MCF 10A (cell line): ENCODE measurements at regions of chr6 and their contacts with region 1.

Region 1: GRCh38 chr6:7479801-7480266 is 61.6 kb upstream of the DSP start:
- DNase-seq: peak; percentile 100
- H3K4me3 Mint-ChIP-seq: peak overlapping the region; percentile 39
- H3K27ac Mint-ChIP-seq: peak overlapping the region; percentile 89
- H3K4me1 Mint-ChIP-seq: peaks cover 11% of the 10 kb centered on the region
- H3K27me3 Mint-ChIP-seq: no peaks in the 10 kb centered on the region
- CTCF ChIP-seq: no peak

Region 2: GRCh38 chr6:7424967-7425807 is 54.6 kb before region 1 on chr6:
- CTCF ChIA-PET with region 1: interaction called, 3 read pairs
- POLR2A ChIA-PET with region 1: interaction called, 16 read pairs
- intact Hi-C with region 1: loop called (anchors 2 kb)
- DNase-seq: peak; percentile 80
- H3K4me3 Mint-ChIP-seq: no peak overlapping the region
- H3K27ac Mint-ChIP-seq: no peak overlapping the region
- H3K4me1 Mint-ChIP-seq: no peaks in the 10 kb centered on the region
- H3K27me3 Mint-ChIP-seq: no peaks in the 10 kb centered on the region
- CTCF ChIP-seq: peak; percentile 61

Region 3: DNA sequence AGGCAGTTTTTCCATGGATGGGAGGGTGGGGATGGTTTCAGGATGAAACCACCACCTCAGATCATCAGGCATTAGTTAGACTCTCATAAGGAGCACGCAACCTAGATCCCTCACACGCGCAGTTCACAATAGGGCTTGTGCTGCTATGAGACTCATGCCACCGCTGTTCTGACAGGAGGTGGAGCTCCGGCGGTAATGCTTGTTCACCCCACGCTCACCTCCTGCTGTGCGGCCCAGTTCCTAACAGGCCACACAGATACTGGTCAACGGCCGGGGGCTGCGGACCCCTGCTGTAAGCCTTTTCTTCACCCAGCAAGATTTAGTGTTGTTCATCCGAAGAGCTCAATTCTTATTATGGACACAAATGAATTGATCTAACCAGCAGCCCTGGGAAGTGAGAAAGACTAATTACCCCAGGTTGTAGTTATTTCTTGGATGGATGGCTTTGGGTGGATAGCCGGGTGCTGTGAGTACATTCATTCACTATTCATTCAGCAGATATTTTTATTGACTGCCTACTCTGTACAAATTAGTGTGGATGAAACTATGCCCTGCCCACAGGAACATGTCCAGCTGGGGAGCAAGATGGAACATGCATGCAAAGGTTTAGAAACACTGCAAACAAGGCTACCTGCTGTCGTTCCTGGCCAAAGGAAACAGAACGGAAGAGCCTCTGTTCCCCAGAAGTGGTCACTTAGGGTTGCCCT is 33.1 kb before region 1 on chr6:
- CTCF ChIA-PET with region 1: no interaction called
- POLR2A ChIA-PET with region 1: interaction called, 14 read pairs
- intact Hi-C with region 1: no loop called
- DNase-seq: peak; percentile 60
- H3K4me3 Mint-ChIP-seq: peak overlapping the region; percentile 18
- H3K27ac Mint-ChIP-seq: peak overlapping the region; percentile 5
- H3K4me1 Mint-ChIP-seq: peaks cover 21% of the 10 kb centered on the region
- H3K27me3 Mint-ChIP-seq: no peaks in the 10 kb centered on the region
- CTCF ChIP-seq: no peak

Region 4: DNA sequence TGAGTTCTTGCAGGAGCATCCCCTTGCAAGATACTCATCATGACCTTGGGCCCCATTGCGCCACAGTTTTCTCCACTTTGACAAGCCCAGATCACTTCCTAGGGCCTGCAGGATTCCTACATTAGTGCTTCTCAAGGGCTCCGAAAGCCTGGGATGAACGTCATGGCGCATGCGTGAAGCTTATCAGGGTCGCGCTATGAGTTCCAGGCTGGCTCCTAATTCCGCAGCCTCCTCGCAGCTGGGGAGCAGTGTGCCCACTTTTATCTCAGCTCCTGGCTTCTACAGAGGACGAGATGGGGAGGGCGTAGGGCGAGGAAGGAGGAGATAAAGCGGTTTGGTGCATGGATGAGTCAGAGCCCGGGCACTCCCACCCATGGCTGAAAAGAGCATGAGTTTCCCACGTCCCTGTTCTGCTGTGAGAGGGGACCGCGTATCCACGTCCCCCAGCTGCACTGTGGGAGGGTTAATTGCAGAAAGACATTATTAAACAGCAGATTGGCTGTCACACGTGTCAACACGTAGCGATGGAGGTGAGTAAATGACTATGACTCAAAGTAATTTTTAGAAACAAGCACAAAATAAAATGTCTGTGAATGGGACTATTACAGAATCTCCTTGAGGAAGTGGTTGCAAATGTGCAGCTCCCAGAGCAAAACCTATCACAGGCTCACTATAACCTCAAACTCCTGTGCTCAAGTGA is 11.3 kb before region 1 on chr6:
- CTCF ChIA-PET with region 1: interaction called, 3 read pairs
- POLR2A ChIA-PET with region 1: interaction called, 34 read pairs
- intact Hi-C with region 1: no loop called
- DNase-seq: peak; percentile 77
- H3K4me3 Mint-ChIP-seq: peak overlapping the region; percentile 72
- H3K27ac Mint-ChIP-seq: peak overlapping the region; percentile 83
- H3K4me1 Mint-ChIP-seq: peaks cover 30% of the 10 kb centered on the region
- H3K27me3 Mint-ChIP-seq: no peaks in the 10 kb centered on the region
- CTCF ChIP-seq: no peak

Region 5: GRCh38 chr6:7513529-7513928 is 33.7 kb after region 1 on chr6:
- CTCF ChIA-PET with region 1: interaction called, 6 read pairs
- POLR2A ChIA-PET with region 1: interaction called, 106 read pairs
- intact Hi-C with region 1: no loop called
- DNase-seq: peak; percentile 14
- H3K4me3 Mint-ChIP-seq: no peak overlapping the region
- H3K27ac Mint-ChIP-seq: no peak overlapping the region
- H3K4me1 Mint-ChIP-seq: peaks cover 31% of the 10 kb centered on the region
- H3K27me3 Mint-ChIP-seq: no peaks in the 10 kb centered on the region
- CTCF ChIP-seq: no peak

Region 6: GRCh38 chr6:7550433-7550801 is 70.6 kb after region 1 on chr6:
- CTCF ChIA-PET with region 1: no interaction called
- POLR2A ChIA-PET with region 1: interaction called, 97 read pairs
- intact Hi-C with region 1: no loop called
- DNase-seq: peak; percentile 63
- H3K4me3 Mint-ChIP-seq: peak overlapping the region; percentile 31
- H3K27ac Mint-ChIP-seq: peak overlapping the region; percentile 57
- H3K4me1 Mint-ChIP-seq: peaks cover 62% of the 10 kb centered on the region
- H3K27me3 Mint-ChIP-seq: no peaks in the 10 kb centered on the region
- CTCF ChIP-seq: no peak

Region 7: GRCh38 chr6:7561153-7561964 is 81.5 kb after region 1 on chr6:
- CTCF ChIA-PET with region 1: no interaction called
- POLR2A ChIA-PET with region 1: interaction called, 20 read pairs
- intact Hi-C with region 1: no loop called
- DNase-seq: peak; percentile 93
- H3K4me3 Mint-ChIP-seq: peak overlapping the region; percentile 64
- H3K27ac Mint-ChIP-seq: peak overlapping the region; percentile 88
- H3K4me1 Mint-ChIP-seq: peaks cover 27% of the 10 kb centered on the region
- H3K27me3 Mint-ChIP-seq: no peaks in the 10 kb centered on the region
- CTCF ChIP-seq: no peak